ENCODE measurements at regions of chr16 and their contacts with region 1.

Region 1: GRCh38 chr16:69644790-69645189 is 79.0 kb downstream of the NFAT5 start:
- DNase-seq: no peak
- H3K4me3 ChIP-seq: no peak overlapping the region
- H3K27ac ChIP-seq: no peak overlapping the region
- H3K4me1 ChIP-seq: no peaks in the 10 kb centered on the region
- H3K27me3 ChIP-seq: no peaks in the 10 kb centered on the region
- CTCF ChIP-seq: no peak

Region 2: DNA sequence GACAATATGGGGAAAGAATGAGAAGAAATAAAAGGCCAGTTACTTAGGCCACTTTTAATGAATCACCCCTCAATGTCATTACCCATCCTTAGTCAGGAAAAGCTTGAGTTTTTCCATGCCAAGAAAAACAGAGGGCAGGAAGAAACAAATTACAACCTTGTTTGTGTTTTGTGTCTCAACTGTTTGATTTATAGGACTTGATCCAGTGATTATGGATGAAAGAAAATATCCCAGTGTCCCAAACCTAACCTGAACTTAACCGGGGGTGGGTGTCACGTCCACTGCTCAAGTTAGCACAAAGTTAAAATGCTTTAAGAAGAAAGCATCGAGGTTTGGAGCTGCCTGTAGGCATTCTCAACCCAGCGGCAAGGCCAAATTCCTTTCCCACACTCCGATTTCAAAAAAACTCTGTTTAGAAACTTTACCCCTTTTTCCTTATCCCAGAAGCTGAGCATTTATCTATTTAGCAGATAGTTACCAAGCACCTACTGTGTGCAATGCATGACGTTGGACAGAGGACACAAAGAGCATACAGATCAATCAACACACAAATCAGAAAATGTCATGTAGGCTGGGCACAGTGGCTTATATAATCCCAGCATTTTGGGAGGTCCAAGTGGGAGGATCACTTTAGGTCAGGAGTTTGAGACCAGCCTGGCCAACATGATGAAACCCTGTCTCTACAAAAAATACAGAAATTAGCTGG is 234.4 kb before region 1 on chr16:
- intact Hi-C with region 1: no loop called
- DNase-seq: no peak
- H3K4me3 ChIP-seq: no peak overlapping the region
- H3K27ac ChIP-seq: no peak overlapping the region
- H3K4me1 ChIP-seq: peaks cover 5% of the 10 kb centered on the region
- H3K27me3 ChIP-seq: no peaks in the 10 kb centered on the region
- CTCF ChIP-seq: no peak

Region 3: DNA sequence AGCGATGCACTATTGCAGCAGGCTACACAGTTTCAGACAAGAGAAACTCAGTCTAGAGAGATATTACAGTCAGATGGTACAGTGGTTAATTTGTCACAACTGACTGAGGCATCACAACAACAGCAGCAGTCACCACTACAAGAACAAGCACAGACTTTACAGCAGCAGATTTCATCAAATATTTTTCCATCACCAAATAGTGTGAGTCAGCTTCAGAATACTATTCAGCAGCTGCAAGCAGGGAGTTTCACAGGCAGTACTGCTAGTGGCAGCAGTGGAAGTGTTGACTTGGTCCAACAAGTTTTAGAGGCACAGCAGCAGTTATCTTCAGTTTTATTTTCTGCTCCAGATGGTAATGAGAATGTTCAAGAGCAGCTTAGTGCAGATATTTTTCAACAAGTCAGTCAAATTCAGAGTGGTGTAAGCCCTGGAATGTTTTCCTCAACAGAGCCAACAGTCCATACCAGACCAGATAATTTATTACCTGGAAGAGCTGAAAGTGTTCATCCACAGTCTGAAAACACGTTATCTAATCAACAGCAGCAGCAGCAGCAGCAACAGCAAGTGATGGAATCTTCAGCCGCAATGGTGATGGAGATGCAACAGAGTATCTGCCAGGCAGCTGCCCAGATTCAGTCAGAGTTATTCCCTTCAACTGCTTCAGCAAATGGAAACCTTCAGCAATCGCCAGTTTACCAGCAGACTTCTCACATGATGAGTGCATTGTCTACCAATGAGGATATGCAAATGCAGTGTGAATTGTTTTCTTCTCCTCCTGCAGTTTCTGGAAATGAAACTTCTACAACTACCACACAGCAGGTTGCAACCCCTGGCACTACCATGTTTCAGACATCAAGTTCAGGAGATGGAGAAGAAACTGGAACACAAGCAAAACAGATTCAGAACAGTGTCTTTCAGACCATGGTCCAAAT is 47.5 kb after region 1 on chr16:
- intact Hi-C with region 1: loop called (anchors 10 kb)
- DNase-seq: no peak
- H3K4me3 ChIP-seq: no peak overlapping the region
- H3K27ac ChIP-seq: no peak overlapping the region
- H3K4me1 ChIP-seq: no peaks in the 10 kb centered on the region
- H3K27me3 ChIP-seq: no peaks in the 10 kb centered on the region
- CTCF ChIP-seq: no peak

Region 4: DNA sequence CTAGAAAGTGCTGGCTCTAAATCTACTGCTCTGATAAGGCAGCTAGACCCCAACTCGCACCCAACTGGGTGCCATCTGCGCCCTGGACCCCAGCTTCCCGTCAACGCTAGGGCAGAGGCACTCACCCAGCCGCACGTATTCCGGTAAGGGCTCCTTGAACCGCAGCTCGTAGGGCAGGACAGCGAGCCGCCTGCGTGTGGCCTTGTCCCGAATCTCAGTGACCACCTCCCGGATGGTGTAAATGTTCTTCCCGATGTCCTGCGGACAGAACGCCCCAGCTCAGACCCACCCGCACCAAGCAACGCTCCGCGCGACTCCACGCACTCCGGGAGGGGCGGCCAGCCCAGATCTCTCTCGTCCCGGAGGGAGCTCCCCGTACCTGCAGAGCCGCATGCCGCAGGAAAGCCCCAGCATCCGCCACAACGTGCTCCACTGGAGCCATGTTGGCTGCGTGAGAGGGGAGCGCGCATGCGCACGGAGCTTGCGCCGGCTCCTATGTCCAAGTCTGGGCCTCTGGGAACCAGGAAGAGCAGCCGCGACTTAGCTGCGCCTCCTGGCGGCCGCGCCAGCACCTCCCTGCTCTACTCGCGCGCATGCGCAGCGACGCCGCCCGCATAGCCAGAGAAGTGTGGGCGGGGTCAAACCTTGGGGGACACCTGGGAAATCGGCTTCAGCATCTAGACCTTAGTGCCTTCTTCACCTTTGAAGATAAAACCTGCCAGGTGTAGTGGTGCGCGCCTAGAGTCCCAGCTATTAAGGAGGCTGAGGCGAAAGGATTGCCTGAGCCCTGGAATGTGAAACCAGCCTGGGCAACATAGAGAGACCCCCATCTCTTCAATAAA is 109.9 kb after region 1 on chr16 and contains the start of gene NOB1:
- intact Hi-C with region 1: no loop called
- DNase-seq: peak; percentile 95
- H3K4me3 ChIP-seq: peak within 1 kb of the TSS; percentile 92
- H3K27ac ChIP-seq: peak within 1 kb of the TSS; percentile 51
- H3K4me1 ChIP-seq: no peaks in the 10 kb centered on the region
- H3K27me3 ChIP-seq: no peaks in the 10 kb centered on the region
- CTCF ChIP-seq: peak; percentile 97
- total RNA-seq, gene NOB1: 36.3 to 45.8 TPM

Measured in colonic mucosa (tissue), 4 donors.